ENCODE measurements at regions of chr10 and their contacts with region 1.

Region 1: DNA sequence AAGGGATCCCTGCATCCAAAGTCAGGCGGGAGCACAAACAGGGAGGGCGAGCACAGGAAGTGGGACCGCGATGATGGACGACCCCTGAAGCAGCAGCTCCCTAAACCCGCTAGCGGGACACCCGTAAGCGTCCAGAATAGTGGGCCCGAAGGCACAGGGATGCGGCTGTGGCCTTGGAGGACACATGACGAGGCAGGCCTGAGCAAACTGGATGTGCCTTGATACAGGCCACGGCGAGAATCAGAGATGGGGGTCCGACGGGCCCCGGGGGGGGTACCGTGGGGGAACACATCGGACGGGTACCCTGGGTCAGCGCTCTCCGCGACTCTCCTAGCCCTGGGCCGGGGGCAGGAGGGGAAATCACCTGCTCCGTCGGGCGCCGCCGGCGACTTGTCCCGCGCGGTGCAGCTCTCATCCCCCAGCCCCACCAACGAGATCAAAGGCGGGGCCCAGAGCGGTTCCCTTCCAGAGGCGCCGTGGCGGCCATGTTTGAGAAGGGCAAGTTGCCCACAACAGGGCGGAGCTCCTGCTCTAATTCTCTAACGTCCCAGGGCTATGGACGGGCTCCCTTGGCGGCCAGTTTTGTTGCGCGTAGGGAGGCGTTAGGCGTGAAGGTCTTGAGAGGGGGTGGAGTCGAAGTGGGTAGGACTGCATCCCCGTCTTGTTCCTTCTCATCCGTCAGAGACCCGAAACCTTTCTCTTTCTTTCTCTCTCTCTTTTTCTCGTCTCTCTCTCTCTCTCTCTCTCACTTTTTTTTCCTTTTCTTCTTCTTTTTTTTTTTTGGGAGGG is at the start of gene CUEDC2:
- DNase-seq: peak; percentile 90 to 100
- H3K4me3 ChIP-seq: peak within 1 kb of the TSS; percentile 66 to 92 (median 84)
- H3K27ac ChIP-seq: peak within 1 kb of the TSS; percentile 72; the same call in 1 of the 2 replicates
- H3K4me1 ChIP-seq: peaks cover 0 to 18% (median 13%) of the 10 kb centered on the region in 4 experiments; a peak in 6 of 7 replicates
- H3K27me3 ChIP-seq: peaks cover 13 to 37% (median 34%) of the 10 kb centered on the region in 4 experiments
- CTCF ChIP-seq: no peak
- EP300 ChIP-seq: no peak
- POLR2A ChIP-seq: peak; percentile 34 to 84
- RAD21 ChIP-seq: peak in 1 of 2 experiments; percentile 5; a peak in 1 of 4 replicates
- total RNA-seq, gene CUEDC2: 41.7 and 43.6 TPM in 2 replicates

Region 2: DNA sequence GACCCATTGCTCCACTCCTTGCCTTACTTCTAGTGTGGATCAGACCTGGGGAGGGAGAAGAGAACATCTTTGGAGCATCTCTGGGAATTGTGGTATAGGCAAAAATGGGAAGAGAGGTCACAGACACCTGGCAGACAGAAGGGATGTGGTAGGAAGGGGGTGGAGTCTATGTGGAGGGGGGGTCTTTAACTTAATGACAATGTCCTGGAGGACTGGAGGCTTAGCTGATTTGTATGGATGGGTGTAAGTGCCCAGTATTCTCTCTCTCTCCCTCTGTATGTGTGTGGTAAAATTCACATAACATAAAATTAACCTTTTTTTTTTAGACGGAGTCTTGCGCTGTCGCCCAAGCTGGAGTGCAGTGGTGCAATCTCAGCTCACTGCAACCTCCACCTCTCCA is 309.1 kb before region 1 on chr10:
- CTCF ChIA-PET with region 1: no interaction called
- POLR2A ChIA-PET with region 1: no interaction called
- DNase-seq: no peak
- H3K4me3 ChIP-seq: no peak overlapping the region
- H3K27ac ChIP-seq: no peak overlapping the region
- H3K4me1 ChIP-seq: peaks cover 14 to 24% (median 17%) of the 10 kb centered on the region in 4 experiments; a peak in 6 of 7 replicates
- H3K27me3 ChIP-seq: no peaks in the 10 kb centered on the region
- CTCF ChIP-seq: no peak
- EP300 ChIP-seq: no peak
- POLR2A ChIP-seq: no peak
- RAD21 ChIP-seq: no peak

Region 3: GRCh38 chr10:102399217-102400089 is 32.9 kb before region 1 on chr10:
- CTCF ChIA-PET with region 1: interaction called, 14 read pairs
- POLR2A ChIA-PET with region 1: interaction called, 6 read pairs
- DNase-seq: peak; percentile 70 to 96
- H3K4me3 ChIP-seq: peak overlapping the region; percentile 33 to 70 (median 60)
- H3K27ac ChIP-seq: no peak overlapping the region
- H3K4me1 ChIP-seq: peaks cover 0 to 22% (median 13%) of the 10 kb centered on the region in 4 experiments; a peak in 6 of 7 replicates
- H3K27me3 ChIP-seq: peaks cover 0 to 14% (median 10%) of the 10 kb centered on the region in 4 experiments; a peak in 6 of 7 replicates
- CTCF ChIP-seq: peak in 2 of 3 experiments; percentile 96; a peak in 3 of 4 replicates
- EP300 ChIP-seq: peak in 1 of 2 experiments; percentile 35; a peak in 1 of 3 replicates
- POLR2A ChIP-seq: peak in 1 of 2 experiments; percentile 73; a peak in 2 of 3 replicates
- RAD21 ChIP-seq: peak; percentile 63 to 75

Region 4: GRCh38 chr10:102408728-102409603 is 23.4 kb before region 1 on chr10:
- CTCF ChIA-PET with region 1: interaction called, 14 read pairs
- POLR2A ChIA-PET with region 1: interaction called, 13 read pairs
- DNase-seq: peak in 1 of 2 experiments; percentile 67
- H3K4me3 ChIP-seq: peak overlapping the region; percentile 55 to 70 (median 57)
- H3K27ac ChIP-seq: no peak overlapping the region
- H3K4me1 ChIP-seq: peaks cover 9 to 31% (median 22%) of the 10 kb centered on the region in 4 experiments
- H3K27me3 ChIP-seq: peaks cover 17 to 52% (median 50%) of the 10 kb centered on the region in 4 experiments
- CTCF ChIP-seq: peak in 1 of 3 experiments; percentile 6; a peak in 1 of 4 replicates
- EP300 ChIP-seq: no peak; a peak in 1 of 3 replicates
- POLR2A ChIP-seq: no peak
- RAD21 ChIP-seq: no peak; a peak in 1 of 4 replicates

Region 5: GRCh38 chr10:102444851-102445250 is 12.5 kb after region 1 on chr10:
- CTCF ChIA-PET with region 1: interaction called, 29 read pairs
- POLR2A ChIA-PET with region 1: interaction called, 75 read pairs
- DNase-seq: no peak
- H3K4me3 ChIP-seq: no peak overlapping the region
- H3K27ac ChIP-seq: no peak overlapping the region
- H3K4me1 ChIP-seq: peaks cover 0 to 4% (median 2%) of the 10 kb centered on the region in 4 experiments; a peak in 4 of 7 replicates
- H3K27me3 ChIP-seq: no peaks in the 10 kb centered on the region
- CTCF ChIP-seq: no peak
- EP300 ChIP-seq: no peak
- POLR2A ChIP-seq: no peak
- RAD21 ChIP-seq: no peak

Region 6: GRCh38 chr10:102450194-102450938 is 18.0 kb after region 1 on chr10:
- CTCF ChIA-PET with region 1: interaction called, 29 read pairs
- POLR2A ChIA-PET with region 1: interaction called, 75 read pairs
- DNase-seq: peak in 1 of 2 experiments; percentile 84
- H3K4me3 ChIP-seq: peak overlapping the region; percentile 87 to 99 (median 98)
- H3K27ac ChIP-seq: peak overlapping the region; percentile 72
- H3K4me1 ChIP-seq: peaks cover 5 to 26% (median 18%) of the 10 kb centered on the region in 4 experiments
- H3K27me3 ChIP-seq: no peaks in the 10 kb centered on the region
- CTCF ChIP-seq: no peak
- EP300 ChIP-seq: no peak
- POLR2A ChIP-seq: no peak; a peak in 1 of 3 replicates
- RAD21 ChIP-seq: no peak; a peak in 1 of 4 replicates

Region 7: DNA sequence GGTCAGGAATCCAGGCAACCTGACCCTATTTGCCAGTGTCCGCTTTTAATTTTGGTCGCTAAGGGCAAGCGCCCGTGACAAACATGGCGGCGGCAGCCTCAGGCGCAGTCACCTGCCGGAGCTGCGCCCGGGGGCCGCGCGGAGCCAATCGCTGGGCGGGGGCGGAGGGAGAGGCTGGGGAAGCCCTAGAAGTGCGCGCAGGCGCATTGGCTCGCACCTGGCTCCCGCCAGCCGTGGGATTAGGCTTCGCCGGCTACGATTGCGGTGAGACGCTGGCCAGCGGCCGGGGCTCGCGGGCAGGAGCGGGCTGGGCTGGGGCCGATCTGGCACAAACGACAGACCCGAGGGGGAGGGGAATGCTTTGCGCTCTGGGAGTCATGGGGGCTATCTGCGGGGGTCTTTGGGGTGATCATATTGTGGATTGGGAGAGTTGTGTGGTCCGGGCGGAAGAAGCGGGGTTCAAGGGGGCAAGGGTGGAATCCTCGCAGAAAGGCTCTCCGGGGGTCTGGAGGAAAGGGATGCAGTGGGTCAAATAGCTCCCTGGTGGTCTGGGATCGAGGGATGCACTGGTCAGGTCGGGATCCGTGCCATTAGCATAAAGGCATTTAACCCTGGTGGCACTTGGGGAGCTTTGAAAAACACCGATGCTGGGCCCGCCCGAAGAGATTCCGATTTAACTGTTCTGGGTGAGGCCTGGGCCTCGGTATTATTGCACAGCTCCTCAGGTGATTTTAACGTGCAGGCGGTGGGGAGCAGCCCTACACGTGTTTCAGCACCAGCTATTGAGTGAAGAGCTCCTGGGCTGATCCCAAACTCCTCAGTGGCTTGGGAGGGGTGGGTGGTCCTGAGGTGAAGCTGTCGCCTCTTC is 29.1 kb after region 1 on chr10:
- CTCF ChIA-PET with region 1: interaction called, 40 read pairs
- POLR2A ChIA-PET with region 1: interaction called, 34 read pairs
- DNase-seq: peak; percentile 75 to 98
- H3K4me3 ChIP-seq: peak overlapping the region; percentile 50 to 75 (median 67)
- H3K27ac ChIP-seq: peak overlapping the region; percentile 51; the same call in 1 of the 2 replicates
- H3K4me1 ChIP-seq: peaks cover 8 to 24% (median 14%) of the 10 kb centered on the region in 4 experiments
- H3K27me3 ChIP-seq: peaks cover 0 to 5% (median 0%) of the 10 kb centered on the region in 4 experiments; a peak in 1 of 7 replicates
- CTCF ChIP-seq: no peak
- EP300 ChIP-seq: peak in 1 of 2 experiments; percentile 16; a peak in 1 of 3 replicates
- POLR2A ChIP-seq: peak in 1 of 2 experiments; percentile 71; a peak in 2 of 3 replicates
- RAD21 ChIP-seq: no peak